ENCODE measurements at regions of chr10 and their contacts with region 1.

Region 1: GRCh38 chr10:82796510-82796909 is 921.5 kb downstream of the NRG3 start:
- DNase-seq: no peak
- ATAC-seq: no peak
- H3K4me3 ChIP-seq: no peak overlapping the region
- H3K27ac ChIP-seq: no peak overlapping the region
- H3K4me1 ChIP-seq: no peaks in the 10 kb centered on the region
- H3K27me3 ChIP-seq: no peaks in the 10 kb centered on the region
- CTCF ChIP-seq: peak in 6 of 7 experiments; percentile 22 to 54 (median 42)
- POLR2A ChIP-seq: no peak

Region 2: DNA sequence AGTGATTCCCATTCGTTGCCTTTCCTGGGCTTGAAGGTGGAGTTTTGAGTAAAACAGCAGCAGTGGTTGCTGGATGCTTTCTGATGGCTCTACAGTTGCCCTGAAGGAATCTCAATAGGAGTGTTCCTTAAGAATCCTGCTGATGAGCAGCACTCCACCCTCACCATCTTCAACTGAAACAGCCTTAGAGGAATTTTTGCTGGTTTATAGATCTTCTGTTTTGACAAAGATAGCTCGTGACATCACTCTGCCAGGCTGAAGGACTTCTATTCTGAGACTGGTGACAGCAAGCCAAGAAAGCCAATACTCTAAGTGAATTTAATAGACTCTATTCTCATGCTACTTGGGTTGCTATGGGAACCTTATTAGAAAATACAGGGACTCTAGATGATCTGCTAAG is 93.2 kb after region 1 on chr10:
- intact Hi-C with region 1: no loop called
- DNase-seq: no peak
- ATAC-seq: no peak
- H3K4me3 ChIP-seq: no peak overlapping the region
- H3K27ac ChIP-seq: no peak overlapping the region
- H3K4me1 ChIP-seq: peaks cover 4% of the 10 kb centered on the region
- H3K27me3 ChIP-seq: no peaks in the 10 kb centered on the region
- CTCF ChIP-seq: no peak
- POLR2A ChIP-seq: no peak

Region 3: GRCh38 chr10:82969405-82969804 is 172.9 kb after region 1 on chr10:
- intact Hi-C with region 1: loop called (anchors 10 kb)
- DNase-seq: no peak
- ATAC-seq: no peak
- H3K4me3 ChIP-seq: no peak overlapping the region
- H3K27ac ChIP-seq: no peak overlapping the region
- H3K4me1 ChIP-seq: no peaks in the 10 kb centered on the region
- H3K27me3 ChIP-seq: no peaks in the 10 kb centered on the region
- CTCF ChIP-seq: peak; percentile 19 to 68 (median 49)
- POLR2A ChIP-seq: no peak

Region 4: GRCh38 chr10:83205861-83206260 is 409.4 kb after region 1 on chr10:
- intact Hi-C with region 1: no loop called
- DNase-seq: no peak
- ATAC-seq: no peak
- H3K4me3 ChIP-seq: no peak overlapping the region
- H3K27ac ChIP-seq: no peak overlapping the region
- H3K4me1 ChIP-seq: no peaks in the 10 kb centered on the region
- H3K27me3 ChIP-seq: no peaks in the 10 kb centered on the region
- CTCF ChIP-seq: no peak
- POLR2A ChIP-seq: no peak